GM12878 (cell line): ENCODE measurements at regions of chr7 and their contacts with region 1.

Region 1: DNA sequence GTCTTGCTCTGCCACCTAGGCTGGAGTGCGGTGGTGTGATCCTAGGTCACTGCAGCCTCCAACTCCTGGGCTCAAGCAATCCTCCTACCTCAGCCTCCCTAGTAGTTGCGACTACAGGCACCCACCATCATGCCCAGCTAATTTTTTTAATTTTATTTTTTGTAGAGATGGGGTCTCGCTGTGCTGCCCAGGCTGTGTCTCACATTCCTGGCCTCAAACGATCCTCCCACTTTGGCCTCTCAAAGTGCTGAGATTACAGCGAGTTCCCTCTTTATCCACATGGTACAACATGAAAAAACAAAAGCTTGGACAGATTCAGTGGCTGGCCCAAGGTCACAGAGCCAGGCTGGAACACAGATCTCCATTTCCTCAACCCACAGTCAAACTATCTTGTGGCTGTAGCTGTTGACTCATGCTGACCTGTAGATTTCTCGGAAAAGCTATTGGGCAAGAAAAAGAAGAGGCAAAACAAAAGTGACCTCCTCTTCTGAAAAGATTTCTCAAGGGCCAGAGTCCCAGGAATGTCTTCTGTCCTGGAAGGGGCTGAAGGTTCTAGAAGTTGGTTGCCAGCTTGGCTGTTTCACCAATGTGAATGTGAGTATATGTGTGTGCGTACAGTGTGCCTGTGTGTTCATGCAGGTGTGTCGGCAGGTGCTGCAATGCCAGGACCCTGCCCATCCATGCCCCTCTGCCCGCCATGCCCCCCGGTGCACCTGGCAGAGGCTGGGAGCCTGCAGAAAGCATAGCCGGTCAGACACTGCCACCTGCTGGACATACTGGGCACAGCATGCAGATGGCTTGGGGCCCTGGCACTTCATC is 28.4 kb downstream of the TMEM130 start:
- DNase-seq: no peak
- ATAC-seq: peak; percentile 86
- H3K4me3 ChIP-seq: no peak overlapping the region
- H3K27ac ChIP-seq: no peak overlapping the region
- H3K4me1 ChIP-seq: no peaks in the 10 kb centered on the region; the same call in 1 of the 2 replicates
- H3K27me3 ChIP-seq: peaks cover 0 to 2% of the 10 kb centered on the region in 2 experiments; a peak in 1 of 4 replicates
- CTCF ChIP-seq: peak; percentile 94 to 96 (median 96)
- EP300 ChIP-seq: no peak
- POLR2A ChIP-seq: no peak
- RAD21 ChIP-seq: peak; percentile 97

Region 2: GRCh38 chr7:98420966-98421612 is 420.3 kb before region 1 on chr7:
- CTCF ChIA-PET with region 1: interaction called, 128 read pairs
- POLR2A ChIA-PET with region 1: no interaction called
- RAD21 ChIA-PET with region 1: interaction called, 11 read pairs
- SMC1A ChIA-PET with region 1: interaction called, 6 read pairs
- in situ Hi-C with region 1: no loop called
- intact Hi-C with region 1: no loop called
- DNase-seq: no peak
- ATAC-seq: peak; percentile 98
- H3K4me3 ChIP-seq: no peak overlapping the region
- H3K27ac ChIP-seq: no peak overlapping the region
- H3K4me1 ChIP-seq: peaks cover 6% of the 10 kb centered on the region; the same call in 1 of the 2 replicates
- H3K27me3 ChIP-seq: 0 out of 4 replicates have a peak, but pooled peaks cover 0 to 3% of the 10 kb centered on the region in 2 experiments
- CTCF ChIP-seq: peak; percentile 84 to 95 (median 93)
- EP300 ChIP-seq: no peak
- POLR2A ChIP-seq: no peak
- RAD21 ChIP-seq: peak; percentile 59

Region 3: DNA sequence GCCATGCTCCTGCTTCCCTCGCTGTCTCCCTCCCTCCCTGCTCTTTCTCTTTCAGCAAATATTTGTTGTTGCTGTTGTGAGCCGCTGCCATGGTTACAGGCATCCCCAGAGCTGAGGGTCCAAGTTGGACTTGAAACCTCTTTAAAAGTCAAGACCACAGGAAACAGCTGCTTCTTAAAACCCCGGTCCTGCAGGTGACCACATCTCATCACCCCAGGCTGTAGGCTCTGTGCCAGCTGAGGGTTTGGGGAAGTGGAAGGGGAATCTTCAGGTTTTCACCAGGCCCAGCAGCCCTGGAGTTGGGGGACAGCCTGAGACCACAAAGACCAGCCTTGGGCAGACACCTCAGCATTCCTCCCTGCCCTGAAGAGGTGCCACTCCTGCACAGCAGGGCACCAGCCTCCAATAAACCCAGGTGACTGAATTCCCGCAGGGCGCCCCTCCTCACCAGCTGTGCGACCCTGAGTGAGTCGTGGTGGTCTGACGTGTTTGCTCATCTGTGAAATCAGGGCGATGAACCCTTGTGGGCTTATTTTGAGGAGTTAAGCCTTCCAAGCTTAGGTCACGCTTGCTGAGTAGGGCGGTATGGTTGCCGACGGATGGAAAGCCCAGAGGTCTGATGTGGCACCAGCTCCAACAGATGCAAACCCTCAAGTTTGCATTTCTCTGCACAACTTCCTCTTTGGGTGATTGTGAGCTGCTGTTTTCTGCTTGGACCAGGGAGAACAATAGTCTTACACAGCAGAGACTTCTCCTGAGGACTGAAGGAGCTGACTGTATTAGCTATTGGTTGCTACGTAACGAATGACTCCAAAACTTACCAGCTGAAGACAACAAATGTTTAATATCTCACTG is 199.5 kb before region 1 on chr7:
- CTCF ChIA-PET with region 1: no interaction called
- POLR2A ChIA-PET with region 1: no interaction called
- RAD21 ChIA-PET with region 1: no interaction called
- SMC1A ChIA-PET with region 1: no interaction called
- in situ Hi-C with region 1: no loop called
- intact Hi-C with region 1: loop called (anchors 5 kb)
- DNase-seq: peak; percentile 87
- ATAC-seq: peak; percentile 84
- H3K4me3 ChIP-seq: peak overlapping the region; percentile 28; the same call in 1 of the 2 replicates
- H3K27ac ChIP-seq: peak overlapping the region; percentile 59
- H3K4me1 ChIP-seq: peaks cover 26% of the 10 kb centered on the region
- H3K27me3 ChIP-seq: no peaks in the 10 kb centered on the region
- CTCF ChIP-seq: no peak
- EP300 ChIP-seq: peak in 1 of 2 experiments; percentile 63; a peak in 2 of 4 replicates
- POLR2A ChIP-seq: no peak
- RAD21 ChIP-seq: no peak

Region 4: GRCh38 chr7:98745722-98746318 is 95.6 kb before region 1 on chr7:
- CTCF ChIA-PET with region 1: interaction called, 36 read pairs
- POLR2A ChIA-PET with region 1: no interaction called
- RAD21 ChIA-PET with region 1: interaction called, 10 read pairs
- SMC1A ChIA-PET with region 1: interaction called, 10 read pairs
- in situ Hi-C with region 1: loop called (anchors 5 kb)
- intact Hi-C with region 1: no loop called
- DNase-seq: no peak
- ATAC-seq: peak; percentile 85
- H3K4me3 ChIP-seq: no peak overlapping the region
- H3K27ac ChIP-seq: no peak overlapping the region
- H3K4me1 ChIP-seq: no peaks in the 10 kb centered on the region
- H3K27me3 ChIP-seq: no peaks in the 10 kb centered on the region
- CTCF ChIP-seq: peak; percentile 75 to 89 (median 88)
- EP300 ChIP-seq: no peak
- POLR2A ChIP-seq: no peak
- RAD21 ChIP-seq: peak; percentile 75